ENCODE measurements at regions of chr1 and their contacts with region 1.

Region 1: GRCh38 chr1:21368515-21369289 is 71.2 kb upstream of the NBPF3 start:
- DNase-seq: peak; percentile 77
- ATAC-seq: peak; percentile 54
- H3K4me3 ChIP-seq: no peak overlapping the region
- H3K4me3 Mint-ChIP-seq: no peak overlapping the region
- H3K27ac ChIP-seq: no peak overlapping the region
- H3K27ac Mint-ChIP-seq: peak overlapping the region; percentile 50
- H3K4me1 ChIP-seq: peaks cover 10 to 20% of the 10 kb centered on the region in 2 donors
- H3K4me1 Mint-ChIP-seq: peaks cover 23% of the 10 kb centered on the region
- H3K27me3 ChIP-seq: no peaks in the 10 kb centered on the region
- H3K27me3 Mint-ChIP-seq: no peaks in the 10 kb centered on the region
- CTCF ChIP-seq: peak; percentile 98

Region 2: GRCh38 chr1:19988267-19989006 is 1380.3 kb before region 1 on chr1:
- CTCF ChIA-PET with region 1: no interaction called
- POLR2A ChIA-PET with region 1: no interaction called
- intact Hi-C with region 1: no loop called
- DNase-seq: no peak
- ATAC-seq: no peak
- H3K4me3 ChIP-seq: no peak overlapping the region
- H3K4me3 Mint-ChIP-seq: no peak overlapping the region
- H3K27ac ChIP-seq: no peak overlapping the region
- H3K27ac Mint-ChIP-seq: no peak overlapping the region
- H3K4me1 ChIP-seq: peaks cover 5 to 11% of the 10 kb centered on the region in 2 donors
- H3K4me1 Mint-ChIP-seq: peaks cover 10% of the 10 kb centered on the region
- H3K27me3 ChIP-seq: no peaks in the 10 kb centered on the region
- H3K27me3 Mint-ChIP-seq: peaks cover 26% of the 10 kb centered on the region
- CTCF ChIP-seq: no peak

Region 3: GRCh38 chr1:21225065-21225464 is 143.6 kb before region 1 on chr1:
- CTCF ChIA-PET with region 1: interaction called, 265 read pairs
- POLR2A ChIA-PET with region 1: no interaction called
- intact Hi-C with region 1: no loop called
- DNase-seq: no peak
- ATAC-seq: no peak
- H3K4me3 ChIP-seq: no peak overlapping the region
- H3K4me3 Mint-ChIP-seq: no peak overlapping the region
- H3K27ac ChIP-seq: no peak overlapping the region
- H3K27ac Mint-ChIP-seq: peak overlapping the region; percentile 20
- H3K4me1 ChIP-seq: no peaks in the 10 kb centered on the region
- H3K4me1 Mint-ChIP-seq: no peaks in the 10 kb centered on the region
- H3K27me3 ChIP-seq: no peaks in the 10 kb centered on the region
- H3K27me3 Mint-ChIP-seq: no peaks in the 10 kb centered on the region
- CTCF ChIP-seq: no peak

Region 4: GRCh38 chr1:21255278-21255942 is 113.3 kb before region 1 on chr1:
- CTCF ChIA-PET with region 1: interaction called, 562 read pairs
- POLR2A ChIA-PET with region 1: interaction called, 5 read pairs
- intact Hi-C with region 1: no loop called
- DNase-seq: peak; percentile 85
- ATAC-seq: peak; percentile 77
- H3K4me3 ChIP-seq: no peak overlapping the region
- H3K4me3 Mint-ChIP-seq: no peak overlapping the region
- H3K27ac ChIP-seq: no peak overlapping the region
- H3K27ac Mint-ChIP-seq: peak overlapping the region; percentile 79
- H3K4me1 ChIP-seq: peaks cover 9 to 19% of the 10 kb centered on the region in 2 donors
- H3K4me1 Mint-ChIP-seq: peaks cover 20% of the 10 kb centered on the region
- H3K27me3 ChIP-seq: no peaks in the 10 kb centered on the region
- H3K27me3 Mint-ChIP-seq: no peaks in the 10 kb centered on the region
- CTCF ChIP-seq: peak; percentile 82

Region 5: DNA sequence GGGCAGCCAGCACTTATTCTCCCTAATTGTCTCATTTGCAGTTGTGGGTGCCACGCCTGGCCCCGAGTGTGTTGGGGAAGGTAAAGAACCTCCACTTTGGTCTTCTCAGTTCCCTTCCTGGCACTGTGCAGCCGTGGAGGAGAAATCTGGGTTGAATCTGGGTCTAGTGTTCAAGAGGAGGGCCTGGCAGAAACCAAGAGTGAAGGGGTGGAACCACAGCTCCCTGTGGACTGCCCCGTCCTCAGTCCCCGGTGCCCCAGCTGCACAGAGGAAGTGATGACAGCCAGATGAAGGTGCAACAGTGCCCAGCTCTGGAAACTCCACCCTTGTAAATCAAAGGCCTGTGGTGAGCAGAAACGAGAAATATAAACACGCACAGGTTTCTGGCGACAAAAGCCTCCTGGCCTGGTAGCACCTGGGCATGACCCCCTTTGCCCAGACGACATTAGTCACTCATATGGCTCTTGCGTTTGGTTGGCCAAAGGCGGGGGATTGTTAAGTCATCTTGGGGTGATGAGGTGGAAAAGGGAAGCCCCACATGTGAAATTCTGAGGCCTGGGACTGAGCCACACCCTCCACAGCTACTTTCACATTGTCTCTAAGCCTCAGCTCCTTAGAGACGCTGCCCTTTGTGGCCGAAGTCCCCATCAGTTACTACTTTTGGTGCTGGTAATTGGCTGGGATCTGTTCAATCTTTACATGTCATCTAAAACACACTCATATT is 74.3 kb before region 1 on chr1:
- CTCF ChIA-PET with region 1: interaction called, 30 read pairs
- POLR2A ChIA-PET with region 1: no interaction called
- intact Hi-C with region 1: loop called (anchors 1 kb)
- DNase-seq: peak; percentile 97
- ATAC-seq: peak; percentile 71
- H3K4me3 ChIP-seq: peak overlapping the region; percentile 48 to 75 (median 61)
- H3K4me3 Mint-ChIP-seq: peak overlapping the region; percentile 87
- H3K27ac ChIP-seq: peak overlapping the region; percentile 96 to 99
- H3K27ac Mint-ChIP-seq: peak overlapping the region; percentile 95
- H3K4me1 ChIP-seq: peaks cover 77 to 90% of the 10 kb centered on the region in 2 donors
- H3K4me1 Mint-ChIP-seq: peaks cover 85% of the 10 kb centered on the region
- H3K27me3 ChIP-seq: no peaks in the 10 kb centered on the region
- H3K27me3 Mint-ChIP-seq: no peaks in the 10 kb centered on the region
- CTCF ChIP-seq: no peak

Region 6: GRCh38 chr1:21334214-21335087 is 34.3 kb before region 1 on chr1:
- CTCF ChIA-PET with region 1: interaction called, 14 read pairs
- POLR2A ChIA-PET with region 1: no interaction called
- intact Hi-C with region 1: loop called (anchors 5 kb)
- DNase-seq: peak; percentile 93
- ATAC-seq: peak; percentile 86
- H3K4me3 ChIP-seq: peak overlapping the region in 4 of 5 experiments; percentile 49 to 69 (median 56)
- H3K4me3 Mint-ChIP-seq: peak overlapping the region; percentile 87
- H3K27ac ChIP-seq: peak overlapping the region; percentile 90 to 95
- H3K27ac Mint-ChIP-seq: peak overlapping the region; percentile 98
- H3K4me1 ChIP-seq: peaks cover 54 to 73% of the 10 kb centered on the region in 2 donors
- H3K4me1 Mint-ChIP-seq: peaks cover 83% of the 10 kb centered on the region
- H3K27me3 ChIP-seq: no peaks in the 10 kb centered on the region
- H3K27me3 Mint-ChIP-seq: no peaks in the 10 kb centered on the region
- CTCF ChIP-seq: peak; percentile 72

Region 7: GRCh38 chr1:21384620-21385019 is 15.9 kb after region 1 on chr1:
- CTCF ChIA-PET with region 1: interaction called, 10 read pairs
- POLR2A ChIA-PET with region 1: no interaction called
- intact Hi-C with region 1: no loop called
- DNase-seq: peak; percentile 28
- ATAC-seq: no peak
- H3K4me3 ChIP-seq: no peak overlapping the region
- H3K4me3 Mint-ChIP-seq: peak overlapping the region; percentile 29
- H3K27ac ChIP-seq: no peak overlapping the region
- H3K27ac Mint-ChIP-seq: no peak overlapping the region
- H3K4me1 ChIP-seq: peaks cover 11 to 12% of the 10 kb centered on the region in 2 donors
- H3K4me1 Mint-ChIP-seq: peaks cover 15% of the 10 kb centered on the region
- H3K27me3 ChIP-seq: peaks cover 0 to 22% (median 11%) of the 10 kb centered on the region in 4 experiments
- H3K27me3 Mint-ChIP-seq: peaks cover 31% of the 10 kb centered on the region
- CTCF ChIP-seq: no peak